ENCODE measurements at regions of chr3 and their contacts with region 1.

Region 1: DNA sequence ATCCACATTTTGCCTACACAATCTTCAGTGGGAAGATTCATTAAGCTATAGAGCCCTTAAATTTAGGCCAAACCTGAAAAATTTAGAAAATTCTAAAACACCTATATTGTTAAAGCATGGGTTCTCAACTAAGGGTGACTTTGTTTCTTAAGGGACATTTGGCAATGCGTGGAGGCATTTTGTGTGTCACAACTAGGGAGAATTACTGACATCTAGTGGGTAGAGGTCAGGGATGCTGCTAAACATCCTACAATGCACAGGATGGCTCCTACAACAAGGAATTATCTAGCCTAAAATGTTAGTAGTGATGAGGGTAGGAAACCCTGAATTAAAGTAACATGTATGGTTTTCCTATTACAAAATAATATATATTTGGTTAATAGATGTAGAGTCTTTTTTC is 55.8 kb downstream of the TBC1D5 start:
- DNase-seq: no peak
- H3K4me3 Mint-ChIP-seq: no peak overlapping the region
- H3K27ac Mint-ChIP-seq: no peak overlapping the region
- H3K4me1 Mint-ChIP-seq: no peaks in the 10 kb centered on the region
- H3K27me3 Mint-ChIP-seq: no peaks in the 10 kb centered on the region

Region 2: DNA sequence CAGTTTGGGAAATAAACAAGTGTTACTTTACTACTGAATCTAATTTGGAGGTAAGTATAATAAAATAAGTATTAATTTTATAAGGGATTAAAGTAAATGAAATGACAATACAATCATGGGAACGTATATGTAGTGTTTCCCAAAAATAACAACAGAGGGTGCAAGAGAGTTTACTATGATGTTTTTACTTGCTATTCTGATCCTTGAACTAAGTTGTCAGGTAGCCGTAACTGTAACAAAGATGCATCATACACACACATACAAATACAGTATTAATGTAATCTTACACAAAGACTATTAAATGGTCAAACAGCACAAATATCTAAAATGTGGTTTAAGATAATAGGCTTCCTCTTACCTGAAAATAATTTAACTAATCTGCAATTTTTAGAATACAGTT is 255.6 kb before region 1 on chr3:
- intact Hi-C with region 1: loop called (anchors 5 kb)
- DNase-seq: no peak
- H3K4me3 Mint-ChIP-seq: no peak overlapping the region
- H3K27ac Mint-ChIP-seq: no peak overlapping the region
- H3K4me1 Mint-ChIP-seq: no peaks in the 10 kb centered on the region
- H3K27me3 Mint-ChIP-seq: no peaks in the 10 kb centered on the region

Region 3: GRCh38 chr3:17518189-17519059 is 168.2 kb before region 1 on chr3:
- intact Hi-C with region 1: loop called (anchors 10 kb)
- DNase-seq: no peak
- H3K4me3 Mint-ChIP-seq: no peak overlapping the region
- H3K27ac Mint-ChIP-seq: no peak overlapping the region
- H3K4me1 Mint-ChIP-seq: no peaks in the 10 kb centered on the region
- H3K27me3 Mint-ChIP-seq: no peaks in the 10 kb centered on the region

Measured in activated T-helper 1 cell treated with anti-CD3 and anti-CD28 coated beads, Interleukin-12 subunit alpha, Interleukin-12 subunit beta, Interleukin-2, Interleukin-4 antibody, amounts not matched to agents 30 ng/mL and 10 ng/mL and 1 ng/mL, durations not matched to agents 14 hours and 24 hours and 36 hours (primary cell).